AG04450 (cell line): ENCODE measurements at regions of chr5 and their contacts with region 1.

Region 1: DNA sequence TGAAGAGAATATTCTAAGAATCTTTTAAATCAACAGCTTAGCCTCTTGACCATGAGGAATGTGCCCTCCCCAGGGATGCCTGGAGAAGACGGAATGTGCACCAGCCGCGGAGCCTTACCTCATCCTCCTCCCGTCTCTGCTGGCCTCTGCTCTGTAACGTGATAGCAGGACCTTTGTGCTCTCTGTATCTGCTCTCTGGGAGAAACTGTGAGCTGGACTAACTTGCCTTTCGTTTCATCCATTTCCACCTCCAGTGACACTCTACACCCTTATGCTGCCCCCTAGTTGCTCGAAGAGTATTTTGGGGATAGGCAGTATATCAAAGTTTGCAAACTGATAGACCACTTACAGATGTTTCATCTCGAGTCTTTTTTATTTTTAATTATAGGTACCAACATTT is 141.4 kb downstream of the NPR3 start:
- DNase-seq: peak; percentile 69
- H3K4me3 ChIP-seq: no peak overlapping the region
- H3K27ac ChIP-seq: no peak overlapping the region
- H3K27me3 ChIP-seq: no peaks in the 10 kb centered on the region
- CTCF ChIP-seq: peak; percentile 56

Region 2: GRCh38 chr5:32520356-32520755 is 332.2 kb before region 1 on chr5:
- CTCF ChIA-PET with region 1: no interaction called
- POLR2A ChIA-PET with region 1: no interaction called
- DNase-seq: no peak
- H3K4me3 ChIP-seq: no peak overlapping the region
- H3K27ac ChIP-seq: no peak overlapping the region
- H3K27me3 ChIP-seq: no peaks in the 10 kb centered on the region
- CTCF ChIP-seq: no peak

Region 3: GRCh38 chr5:32531885-32532520 is 320.5 kb before region 1 on chr5:
- CTCF ChIA-PET with region 1: no interaction called
- POLR2A ChIA-PET with region 1: no interaction called
- DNase-seq: no peak
- H3K4me3 ChIP-seq: peak overlapping the region; percentile 40
- H3K27ac ChIP-seq: peak overlapping the region; percentile 34
- H3K27me3 ChIP-seq: no peaks in the 10 kb centered on the region
- CTCF ChIP-seq: no peak

Region 4: GRCh38 chr5:32814620-32815019 is 37.9 kb before region 1 on chr5:
- CTCF ChIA-PET with region 1: no interaction called
- POLR2A ChIA-PET with region 1: no interaction called
- DNase-seq: no peak
- H3K4me3 ChIP-seq: no peak overlapping the region
- H3K27ac ChIP-seq: no peak overlapping the region
- H3K27me3 ChIP-seq: no peaks in the 10 kb centered on the region
- CTCF ChIP-seq: no peak

Region 5: GRCh38 chr5:32831630-32832029 is 20.9 kb before region 1 on chr5:
- CTCF ChIA-PET with region 1: interaction called, 10 read pairs
- POLR2A ChIA-PET with region 1: no interaction called
- DNase-seq: no peak
- H3K4me3 ChIP-seq: no peak overlapping the region
- H3K27ac ChIP-seq: no peak overlapping the region
- H3K27me3 ChIP-seq: peaks cover 2% of the 10 kb centered on the region
- CTCF ChIP-seq: no peak